ENCODE measurements at regions of chr18 and their contacts with region 1.

Region 1: DNA sequence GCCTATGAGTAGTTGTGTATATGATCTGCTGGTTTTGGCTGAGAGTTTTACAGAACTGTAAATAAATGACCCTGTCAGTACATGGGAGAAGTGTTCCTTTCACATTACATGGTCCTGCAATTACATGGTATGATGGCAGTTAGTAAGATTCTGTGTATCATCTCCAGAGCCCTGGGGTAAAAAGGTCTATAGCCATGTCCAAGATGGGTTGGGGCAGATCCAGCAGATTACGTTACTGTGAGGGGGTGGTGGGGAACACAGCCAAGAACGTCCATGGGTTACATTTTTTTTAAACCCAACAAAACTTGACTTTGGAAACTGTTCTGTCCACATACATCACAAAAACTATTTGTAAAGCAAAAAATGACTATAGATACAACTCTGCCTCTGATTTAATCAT is 64.2 kb upstream of the LMAN1 start:
- DNase-seq: no peak
- H3K4me3 ChIP-seq: no peak overlapping the region
- H3K27ac ChIP-seq: no peak overlapping the region
- H3K4me1 ChIP-seq: no peaks in the 10 kb centered on the region
- H3K27me3 ChIP-seq: peaks cover 15% of the 10 kb centered on the region
- CTCF ChIP-seq: no peak

Region 2: GRCh38 chr18:59379772-59380522 is 43.3 kb before region 1 on chr18:
- CTCF ChIA-PET with region 1: no interaction called
- dilution Hi-C with region 1: no loop called
- in situ Hi-C with region 1: no loop called
- intact Hi-C with region 1: no loop called
- DNase-seq: no peak
- H3K4me3 ChIP-seq: no peak overlapping the region
- H3K27ac ChIP-seq: no peak overlapping the region
- H3K4me1 ChIP-seq: no peaks in the 10 kb centered on the region
- H3K27me3 ChIP-seq: no peaks in the 10 kb centered on the region
- CTCF ChIP-seq: no peak

Region 3: DNA sequence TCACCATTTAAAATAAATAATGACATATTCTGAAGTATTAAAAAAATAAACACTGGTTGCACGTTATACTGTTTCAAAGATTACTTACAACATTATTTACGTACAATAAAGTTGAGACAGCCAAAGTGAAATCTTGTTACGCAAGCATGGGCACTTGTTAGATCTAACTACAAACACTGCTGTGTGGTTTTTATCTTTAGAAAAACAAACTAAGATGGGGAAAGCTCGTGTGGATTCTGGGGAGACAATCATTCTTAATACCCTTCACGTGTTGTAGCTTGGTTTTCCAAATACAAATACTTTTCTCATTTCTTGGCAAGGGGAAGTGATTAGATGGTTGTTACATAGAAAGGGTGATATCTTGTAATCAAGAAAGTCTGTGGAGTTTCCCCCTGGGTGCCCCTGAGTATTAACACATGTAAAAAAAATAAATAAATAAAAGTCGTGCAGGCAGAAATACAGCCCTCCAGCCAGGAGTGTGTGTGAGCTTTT is 61.6 kb after region 1 on chr18:
- CTCF ChIA-PET with region 1: no interaction called
- dilution Hi-C with region 1: loop called (anchors 10 kb)
- in situ Hi-C with region 1: no loop called
- intact Hi-C with region 1: no loop called
- DNase-seq: no peak
- H3K4me3 ChIP-seq: no peak overlapping the region
- H3K27ac ChIP-seq: no peak overlapping the region
- H3K4me1 ChIP-seq: no peaks in the 10 kb centered on the region
- H3K27me3 ChIP-seq: no peaks in the 10 kb centered on the region
- CTCF ChIP-seq: no peak